HEK293 (cell line): ENCODE measurements at regions of chr1 and their contacts with region 1.

Region 1: GRCh38 chr1:153494976-153495535 is 34.6 kb upstream of the S100A7 start:
- H3K4me3 ChIP-seq: no peak overlapping the region
- H3K27ac ChIP-seq: no peak overlapping the region
- H3K4me1 ChIP-seq: no peaks in the 10 kb centered on the region; the same call in 1 of the 2 replicates
- CTCF ChIP-seq: peak; percentile 92

Region 2: GRCh38 chr1:153478692-153479618 is 16.1 kb before region 1 on chr1:
- CTCF ChIA-PET with region 1: interaction called, 29 read pairs
- POLR2A ChIA-PET with region 1: no interaction called
- H3K4me3 ChIP-seq: no peak overlapping the region
- H3K27ac ChIP-seq: no peak overlapping the region
- H3K4me1 ChIP-seq: no peaks in the 10 kb centered on the region
- CTCF ChIP-seq: no peak

Region 3: DNA sequence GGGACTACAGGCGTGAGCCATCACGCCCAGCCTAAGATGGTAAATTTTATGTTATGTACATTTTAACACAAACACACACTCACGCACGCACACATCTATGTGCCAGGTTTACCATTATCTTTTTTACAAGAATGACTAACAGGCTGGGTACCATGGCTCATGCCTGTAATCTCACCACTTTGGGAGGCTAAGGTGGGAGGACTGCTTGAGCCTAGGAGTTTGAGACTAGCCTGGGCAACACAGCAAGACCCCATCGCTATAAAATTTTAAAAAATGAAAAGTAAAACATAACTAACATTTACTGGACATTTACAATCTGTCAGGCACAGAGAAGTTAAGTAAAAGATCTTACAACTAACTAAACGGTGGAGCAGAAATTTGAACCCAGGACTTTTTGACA is 413.0 kb after region 1 on chr1:
- CTCF ChIA-PET with region 1: no interaction called
- POLR2A ChIA-PET with region 1: no interaction called
- H3K4me3 ChIP-seq: no peak overlapping the region
- H3K27ac ChIP-seq: no peak overlapping the region
- H3K4me1 ChIP-seq: 0 out of 2 replicates have a peak, but pooled peaks cover 2% of the 10 kb centered on the region
- CTCF ChIP-seq: no peak